ENCODE measurements at regions of chr1 and their contacts with region 1.

Region 1: GRCh38 chr1:203216274-203217138 is 13.0 kb downstream of the CHIT1 start:
- DNase-seq: peak; percentile 89
- H3K4me3 Mint-ChIP-seq: no peak overlapping the region
- H3K27ac Mint-ChIP-seq: no peak overlapping the region
- H3K4me1 Mint-ChIP-seq: no peaks in the 10 kb centered on the region
- H3K27me3 Mint-ChIP-seq: peaks cover 33% of the 10 kb centered on the region
- CTCF ChIP-seq: peak; percentile 93

Region 2: GRCh38 chr1:203057911-203058675 is 158.4 kb before region 1 on chr1:
- CTCF ChIA-PET with region 1: interaction called, 54 read pairs
- POLR2A ChIA-PET with region 1: no interaction called
- intact Hi-C with region 1: no loop called
- DNase-seq: no peak
- H3K4me3 Mint-ChIP-seq: no peak overlapping the region
- H3K27ac Mint-ChIP-seq: no peak overlapping the region
- H3K4me1 Mint-ChIP-seq: no peaks in the 10 kb centered on the region
- H3K27me3 Mint-ChIP-seq: peaks cover 21% of the 10 kb centered on the region
- CTCF ChIP-seq: no peak

Region 3: DNA sequence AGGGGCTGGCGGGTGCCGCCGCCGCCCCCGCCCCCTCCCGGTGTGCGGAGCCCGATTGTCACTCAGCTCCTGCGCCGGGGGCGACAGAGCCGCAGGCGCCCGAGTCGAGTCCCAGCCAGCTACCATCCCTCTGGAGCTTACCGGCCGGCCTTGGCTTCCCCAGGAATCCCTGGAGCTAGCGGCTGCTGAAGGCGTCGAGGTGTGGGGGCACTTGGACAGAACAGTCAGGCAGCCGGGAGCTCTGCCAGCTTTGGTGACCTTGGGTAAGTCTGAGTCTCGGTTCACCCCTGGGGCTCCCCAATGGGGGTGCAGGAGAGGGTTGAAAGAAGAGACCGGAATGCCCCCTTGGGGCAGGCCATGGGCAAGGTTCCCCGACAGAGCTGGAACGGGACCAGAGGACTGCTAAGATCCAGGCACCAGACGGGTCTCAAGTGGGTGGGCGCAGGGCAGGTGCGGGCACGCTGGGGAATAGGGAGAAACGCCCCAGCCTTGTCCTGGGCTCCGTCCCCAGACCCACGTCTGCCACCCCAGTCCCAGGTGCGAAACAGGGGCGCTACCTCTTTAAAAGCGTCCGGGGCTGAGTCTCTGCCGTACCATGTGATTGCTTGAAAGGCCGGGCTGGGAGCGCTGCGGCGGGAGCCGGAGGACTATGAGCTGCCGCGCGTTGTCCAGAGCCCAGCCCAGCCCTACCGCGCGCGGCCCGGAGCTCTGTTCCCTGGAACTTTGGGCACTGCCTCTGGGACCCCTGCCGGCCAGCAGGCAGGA is 88.7 kb before region 1 on chr1 and contains the start of gene ADORA1:
- CTCF ChIA-PET with region 1: interaction called, 27 read pairs
- POLR2A ChIA-PET with region 1: interaction called, 3 read pairs
- intact Hi-C with region 1: no loop called
- DNase-seq: peak; percentile 87
- H3K4me3 Mint-ChIP-seq: peak within 1 kb of the TSS; percentile 72
- H3K27ac Mint-ChIP-seq: peak within 1 kb of the TSS; percentile 21
- H3K4me1 Mint-ChIP-seq: peaks cover 18% of the 10 kb centered on the region
- H3K27me3 Mint-ChIP-seq: peaks cover 13% of the 10 kb centered on the region
- CTCF ChIP-seq: no peak
- total RNA-seq, gene ADORA1: 0.26 and 0.34 TPM in 2 replicates

Region 4: DNA sequence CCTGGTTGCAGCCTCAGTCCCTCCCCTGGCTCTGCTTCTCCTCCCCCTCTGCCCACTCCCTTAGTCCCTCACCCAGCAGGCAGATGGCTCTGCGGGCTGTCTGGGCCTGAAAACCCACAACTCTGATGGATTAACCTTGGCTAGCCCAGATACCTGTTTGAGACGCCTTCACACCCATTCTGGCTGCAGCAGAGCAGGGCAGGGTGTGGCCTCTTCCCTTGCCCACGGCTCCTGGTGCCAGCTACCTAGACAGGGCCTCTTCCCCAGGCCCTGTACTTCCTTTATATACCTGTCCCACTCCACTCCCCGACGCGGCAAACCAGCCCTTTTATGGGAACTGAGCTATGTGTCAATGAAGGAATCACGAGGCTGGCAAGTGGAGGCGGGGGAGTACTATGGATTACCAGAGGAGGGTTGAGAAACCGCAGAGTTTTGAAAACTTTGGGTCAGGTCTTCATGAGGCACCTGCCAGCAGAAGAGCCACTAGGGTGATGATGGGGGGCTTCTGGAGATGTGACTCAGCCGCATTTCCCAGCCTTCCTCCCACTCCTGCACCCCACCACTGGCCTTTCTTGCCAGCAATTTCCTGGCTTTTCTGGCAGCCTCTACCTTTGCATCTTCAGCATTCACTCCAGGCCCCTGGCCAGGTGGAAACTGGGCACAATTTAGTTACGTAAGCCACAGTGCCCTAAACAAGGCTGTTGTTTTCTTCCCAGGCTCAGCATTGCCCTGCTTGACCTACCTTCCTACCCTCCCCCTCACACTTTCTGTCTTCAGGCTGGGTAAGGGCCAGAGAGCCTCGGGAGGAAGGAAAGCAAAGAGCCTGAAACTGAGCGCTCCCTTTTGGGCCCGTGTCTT is 29.8 kb before region 1 on chr1 and contains the start of gene CHI3L1:
- CTCF ChIA-PET with region 1: interaction called, 10 read pairs
- POLR2A ChIA-PET with region 1: interaction called, 3 read pairs
- intact Hi-C with region 1: no loop called
- DNase-seq: peak; percentile 97
- H3K4me3 Mint-ChIP-seq: no peak within 1 kb of the TSS
- H3K27ac Mint-ChIP-seq: no peak within 1 kb of the TSS
- H3K4me1 Mint-ChIP-seq: peaks cover 13% of the 10 kb centered on the region
- H3K27me3 Mint-ChIP-seq: peaks cover 33% of the 10 kb centered on the region
- CTCF ChIP-seq: no peak
- total RNA-seq, gene CHI3L1: 0.75 and 0.88 TPM in 2 replicates

Region 5: DNA sequence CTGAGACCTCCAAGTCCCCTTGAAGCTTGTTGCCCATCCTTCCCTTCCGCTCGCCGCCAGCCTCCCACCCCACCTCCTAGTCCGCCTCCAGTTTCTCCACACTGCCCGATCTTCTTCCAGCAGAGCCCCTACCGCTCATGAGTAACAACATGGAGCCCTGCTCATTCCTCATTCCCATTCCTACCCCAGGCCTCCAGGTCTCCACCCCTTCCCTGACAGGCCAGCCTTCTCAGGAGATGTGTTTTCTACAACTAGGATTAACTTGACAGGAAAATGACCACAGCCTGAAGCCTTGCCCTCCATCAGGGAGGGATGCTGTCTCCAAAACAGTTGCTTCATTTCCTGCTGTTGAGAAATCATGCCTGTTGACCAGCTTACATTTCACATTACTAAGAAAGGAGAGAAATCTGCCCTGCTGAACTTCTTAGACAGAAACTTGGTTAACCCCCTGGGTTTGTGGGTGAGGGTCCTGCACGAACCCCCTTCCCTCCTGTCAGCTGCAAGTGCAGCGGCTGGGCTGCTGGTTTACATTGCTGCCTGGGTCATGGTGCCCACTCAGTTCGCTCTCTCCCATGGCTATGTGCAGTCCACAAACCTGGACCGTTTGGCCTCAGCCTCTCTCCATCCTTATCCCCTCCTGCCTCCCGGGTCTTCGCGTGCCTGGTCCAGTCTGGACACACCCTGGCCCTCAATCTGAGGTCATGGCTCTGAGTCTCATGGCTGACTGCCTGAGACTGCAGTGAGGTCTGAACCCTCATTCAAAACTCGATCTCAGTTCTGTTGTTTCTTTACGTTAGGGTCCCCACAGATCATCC is 13.9 kb before region 1 on chr1:
- CTCF ChIA-PET with region 1: interaction called, 69 read pairs
- POLR2A ChIA-PET with region 1: interaction called, 3 read pairs
- intact Hi-C with region 1: no loop called
- DNase-seq: peak; percentile 97
- H3K4me3 Mint-ChIP-seq: no peak overlapping the region
- H3K27ac Mint-ChIP-seq: no peak overlapping the region
- H3K4me1 Mint-ChIP-seq: peaks cover 22% of the 10 kb centered on the region
- H3K27me3 Mint-ChIP-seq: peaks cover 7% of the 10 kb centered on the region
- CTCF ChIP-seq: no peak